ENCODE measurements at regions of chr10 and their contacts with region 1.

Region 1: DNA sequence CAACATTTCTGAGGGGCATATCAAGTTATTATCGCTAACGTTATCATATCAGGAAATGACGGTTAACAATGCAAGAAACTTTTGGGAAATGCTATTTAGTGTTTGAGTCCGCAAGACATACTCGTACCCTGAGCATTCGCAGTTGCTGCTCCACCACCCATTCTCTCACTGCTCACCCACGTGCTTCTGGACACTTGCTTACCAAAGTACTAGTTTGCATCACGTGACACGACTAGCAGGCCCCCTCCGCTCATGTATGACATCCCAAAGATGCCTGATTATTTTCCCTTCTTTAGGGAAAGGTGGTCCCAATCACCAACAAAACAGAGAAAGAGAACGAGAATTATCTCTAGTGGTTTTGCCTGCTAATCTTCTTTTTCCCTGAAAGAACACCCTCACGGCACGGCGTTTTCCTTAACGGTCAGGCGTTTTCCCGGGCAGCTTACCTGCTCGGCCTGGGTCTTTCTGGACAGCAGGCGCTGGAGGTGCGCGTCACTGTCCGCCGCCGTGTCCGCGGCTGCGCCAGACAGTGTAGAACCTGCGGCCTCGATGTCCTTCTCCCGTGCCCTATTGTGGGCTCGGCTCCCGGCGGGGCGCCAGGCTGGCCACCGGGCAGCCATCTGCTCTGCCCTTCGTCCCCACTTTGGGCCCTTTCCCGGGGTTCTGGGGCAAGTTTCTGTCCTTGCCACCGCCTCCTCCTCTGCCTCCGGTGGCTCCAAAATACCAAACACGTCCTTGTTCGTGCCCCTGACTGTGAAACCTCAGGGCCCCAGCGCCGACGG is at the start of gene SUPV3L1:
- DNase-seq: peak; percentile 92
- H3K4me3 ChIP-seq: peak within 1 kb of the TSS; percentile 91 to 99 (median 97)
- H3K27ac ChIP-seq: peak within 1 kb of the TSS; percentile 87 to 96 (median 91)
- H3K4me1 ChIP-seq: peaks cover 10 to 23% (median 19%) of the 10 kb centered on the region in 4 donors
- H3K27me3 ChIP-seq: no peaks in the 10 kb centered on the region
- CTCF ChIP-seq: no peak
- EP300 ChIP-seq: no peak
- POLR2A ChIP-seq: peak; percentile 92
- total RNA-seq, gene SUPV3L1: 15.3 to 34.0 (median 26.7) TPM

Region 2: DNA sequence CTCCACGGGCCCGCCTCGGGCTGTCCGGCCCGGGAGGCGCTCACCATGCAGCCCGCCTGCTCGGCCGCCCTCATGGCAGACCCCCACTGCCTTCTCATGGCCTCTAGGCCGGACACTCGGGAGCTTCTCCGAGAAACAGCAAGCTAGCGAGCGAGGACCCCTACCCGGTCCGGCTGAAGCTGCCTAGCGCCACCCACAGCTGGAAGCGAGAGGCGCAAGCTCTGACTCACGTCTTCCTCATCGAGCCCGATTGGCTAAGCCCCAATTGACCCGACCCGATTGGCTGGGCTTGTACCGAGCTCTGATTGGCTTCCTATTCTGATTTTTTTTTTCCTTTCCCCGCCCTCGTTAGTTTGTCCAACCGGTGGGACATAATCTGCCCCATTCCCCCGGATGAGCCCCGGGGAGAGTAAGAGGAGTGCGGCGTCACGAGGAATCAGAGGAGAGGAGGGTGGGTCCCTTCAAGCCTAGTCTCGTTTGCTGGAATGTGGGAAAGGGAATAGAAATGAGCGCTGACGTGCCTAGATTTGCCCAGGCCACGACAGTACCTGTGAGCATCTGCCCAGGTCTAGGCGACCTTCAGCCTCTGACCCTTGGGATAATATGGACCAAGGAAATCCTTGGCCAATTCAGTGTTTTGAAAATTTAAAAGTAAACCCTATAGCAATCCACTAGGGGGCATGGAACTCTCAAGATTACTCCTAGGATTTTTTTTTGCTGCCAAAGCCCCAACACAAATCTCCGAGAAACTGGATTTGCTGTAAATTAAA is 966.7 kb after region 1 on chr10 and contains the start of gene TYSND1:
- in situ Hi-C with region 1: no loop called
- intact Hi-C with region 1: loop called (anchors 5 kb)
- DNase-seq: peak; percentile 98
- H3K4me3 ChIP-seq: peak within 1 kb of the TSS; percentile 74 to 86 (median 76)
- H3K27ac ChIP-seq: peak within 1 kb of the TSS; percentile 93 to 99 (median 98)
- H3K4me1 ChIP-seq: peaks cover 13 to 19% (median 17%) of the 10 kb centered on the region in 4 donors
- H3K27me3 ChIP-seq: no peaks in the 10 kb centered on the region
- CTCF ChIP-seq: peak; percentile 41 to 88 (median 69)
- EP300 ChIP-seq: no peak
- POLR2A ChIP-seq: peak; percentile 89
- total RNA-seq, gene TYSND1: 18.6 to 48.8 (median 21.9) TPM

Measured in transverse colon (tissue), 4 donors.